ENCODE measurements at regions of chr3 and their contacts with region 1.

Region 1: DNA sequence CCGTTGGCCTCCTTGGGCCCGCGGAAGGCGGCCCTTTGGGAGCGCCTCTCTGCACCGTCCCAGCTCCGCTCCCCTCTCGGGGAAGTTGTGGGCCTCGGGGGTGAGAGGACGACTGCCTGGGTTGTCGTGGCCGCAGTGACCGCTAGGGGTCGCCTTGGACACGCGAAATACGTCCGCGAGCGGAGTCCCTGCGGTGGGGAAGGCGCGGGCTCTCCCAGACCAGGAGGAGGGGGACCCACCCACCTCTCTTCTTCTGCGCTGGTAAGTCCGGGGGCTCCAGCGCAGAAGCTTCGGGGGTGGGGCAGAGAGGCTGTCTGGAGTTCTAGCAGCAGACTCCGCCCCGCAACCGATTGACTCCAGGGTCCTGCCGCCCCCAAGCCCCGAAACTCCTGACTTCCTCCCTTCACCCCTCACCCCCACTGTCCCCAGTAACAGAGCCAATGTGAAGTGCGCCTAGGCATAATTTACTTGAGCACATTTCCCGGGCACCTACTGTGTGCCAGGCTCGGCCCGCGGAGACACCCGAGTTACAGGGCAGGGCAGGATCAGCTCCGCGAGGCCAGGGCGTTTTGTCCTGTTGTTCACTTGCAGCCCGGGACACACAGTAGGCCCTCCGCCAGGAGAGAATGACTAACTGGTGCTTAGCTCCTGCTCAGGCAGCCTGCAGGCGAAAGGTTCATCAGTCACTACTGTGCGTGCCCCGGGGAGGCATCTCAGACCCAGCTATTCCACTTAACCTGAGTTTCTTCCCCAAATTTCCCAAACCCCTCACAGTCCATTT is 32.8 kb downstream of the DNASE1L3 start:
- DNase-seq: no peak
- ATAC-seq: peak; percentile 94
- H3K4me3 ChIP-seq: peak overlapping the region; percentile 33; the same call in 1 of the 2 replicates
- H3K27ac ChIP-seq: no peak overlapping the region
- H3K4me1 ChIP-seq: peaks cover 14% of the 10 kb centered on the region
- H3K27me3 ChIP-seq: no peaks in the 10 kb centered on the region
- CTCF ChIP-seq: peak; percentile 81 to 93 (median 88)
- EP300 ChIP-seq: no peak
- POLR2A ChIP-seq: no peak
- RAD21 ChIP-seq: peak; percentile 68

Region 2: DNA sequence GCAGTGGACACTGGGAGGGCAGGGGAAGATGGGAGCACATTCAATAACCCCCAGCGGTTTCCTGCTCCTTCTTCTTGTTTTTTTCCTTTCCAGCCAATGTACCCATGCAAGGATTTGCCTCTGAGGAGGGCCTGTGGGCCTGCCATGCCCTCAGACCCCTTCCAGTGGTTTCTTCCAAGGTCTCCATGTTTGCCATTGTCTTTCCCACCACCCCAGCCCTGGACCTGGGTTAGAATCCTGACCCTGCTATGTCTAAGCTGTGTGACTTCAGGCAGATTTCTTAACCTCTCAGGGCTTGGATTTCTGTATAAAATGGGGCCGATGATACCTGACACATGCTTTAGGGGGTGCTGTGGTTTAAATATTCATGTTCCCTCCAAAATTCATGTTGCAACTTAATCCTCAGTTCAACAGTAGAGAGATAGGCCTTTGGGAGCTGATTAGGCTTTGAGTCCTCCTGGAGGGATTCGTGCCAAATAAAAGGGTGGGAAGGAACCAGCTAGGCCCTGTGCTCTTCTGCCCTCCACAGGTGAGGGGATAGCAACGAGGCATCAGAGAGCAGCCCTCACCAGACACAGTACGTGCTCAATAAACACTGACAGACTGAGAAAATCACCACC is 216.0 kb before region 1 on chr3:
- CTCF ChIA-PET with region 1: interaction called, 21 read pairs
- POLR2A ChIA-PET with region 1: no interaction called
- RAD21 ChIA-PET with region 1: interaction called, 6 read pairs
- SMC1A ChIA-PET with region 1: interaction called, 4 read pairs
- in situ Hi-C with region 1: no loop called
- intact Hi-C with region 1: loop called (anchors 5 kb)
- DNase-seq: no peak
- ATAC-seq: peak; percentile 57
- H3K4me3 ChIP-seq: no peak overlapping the region
- H3K27ac ChIP-seq: no peak overlapping the region
- H3K4me1 ChIP-seq: peaks cover 14% of the 10 kb centered on the region
- H3K27me3 ChIP-seq: no peaks in the 10 kb centered on the region
- CTCF ChIP-seq: peak; percentile 28 to 49 (median 40); a peak in 4 of 6 replicates
- EP300 ChIP-seq: no peak
- POLR2A ChIP-seq: no peak
- RAD21 ChIP-seq: peak; percentile 61

Region 3: DNA sequence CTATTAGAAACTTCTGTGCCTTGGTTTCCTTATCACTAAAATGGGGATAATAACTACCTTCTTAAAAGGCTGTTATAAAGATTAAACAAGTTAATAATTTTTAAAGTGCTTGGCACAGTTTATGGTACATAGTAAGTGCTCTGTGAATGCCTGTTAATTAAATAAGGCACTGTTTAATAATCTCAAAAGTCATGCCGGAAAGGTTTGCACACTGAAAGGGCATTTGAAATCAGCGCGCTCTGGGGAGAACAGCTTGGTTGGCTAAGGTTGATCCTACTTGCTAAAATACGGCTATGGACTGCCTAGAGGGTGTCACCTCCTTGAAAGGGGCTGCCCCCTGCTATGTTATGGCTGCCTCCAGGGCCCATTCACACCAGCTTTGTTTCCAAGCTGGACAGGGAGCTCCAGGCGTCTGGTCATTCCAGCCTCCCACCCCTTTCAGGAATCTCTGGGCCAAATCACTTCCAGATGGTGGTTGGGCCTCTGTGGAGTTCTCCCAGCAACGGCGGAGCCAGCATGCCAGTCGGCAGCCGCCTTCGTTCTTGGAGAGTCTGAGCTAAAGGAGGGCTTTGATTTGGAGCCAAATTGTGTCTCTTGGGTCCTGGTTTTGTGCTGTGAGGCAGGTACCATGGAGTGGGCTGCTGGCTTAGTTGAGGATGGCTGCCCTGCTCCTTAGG is 163.8 kb before region 1 on chr3:
- CTCF ChIA-PET with region 1: interaction called, 43 read pairs
- POLR2A ChIA-PET with region 1: no interaction called
- RAD21 ChIA-PET with region 1: interaction called, 9 read pairs
- SMC1A ChIA-PET with region 1: interaction called, 15 read pairs
- in situ Hi-C with region 1: loop called (anchors 5 kb)
- intact Hi-C with region 1: no loop called
- DNase-seq: no peak
- ATAC-seq: no peak
- H3K4me3 ChIP-seq: no peak overlapping the region
- H3K27ac ChIP-seq: no peak overlapping the region
- H3K4me1 ChIP-seq: peaks cover 16% of the 10 kb centered on the region
- H3K27me3 ChIP-seq: no peaks in the 10 kb centered on the region
- CTCF ChIP-seq: no peak
- EP300 ChIP-seq: no peak
- POLR2A ChIP-seq: no peak
- RAD21 ChIP-seq: no peak

Region 4: DNA sequence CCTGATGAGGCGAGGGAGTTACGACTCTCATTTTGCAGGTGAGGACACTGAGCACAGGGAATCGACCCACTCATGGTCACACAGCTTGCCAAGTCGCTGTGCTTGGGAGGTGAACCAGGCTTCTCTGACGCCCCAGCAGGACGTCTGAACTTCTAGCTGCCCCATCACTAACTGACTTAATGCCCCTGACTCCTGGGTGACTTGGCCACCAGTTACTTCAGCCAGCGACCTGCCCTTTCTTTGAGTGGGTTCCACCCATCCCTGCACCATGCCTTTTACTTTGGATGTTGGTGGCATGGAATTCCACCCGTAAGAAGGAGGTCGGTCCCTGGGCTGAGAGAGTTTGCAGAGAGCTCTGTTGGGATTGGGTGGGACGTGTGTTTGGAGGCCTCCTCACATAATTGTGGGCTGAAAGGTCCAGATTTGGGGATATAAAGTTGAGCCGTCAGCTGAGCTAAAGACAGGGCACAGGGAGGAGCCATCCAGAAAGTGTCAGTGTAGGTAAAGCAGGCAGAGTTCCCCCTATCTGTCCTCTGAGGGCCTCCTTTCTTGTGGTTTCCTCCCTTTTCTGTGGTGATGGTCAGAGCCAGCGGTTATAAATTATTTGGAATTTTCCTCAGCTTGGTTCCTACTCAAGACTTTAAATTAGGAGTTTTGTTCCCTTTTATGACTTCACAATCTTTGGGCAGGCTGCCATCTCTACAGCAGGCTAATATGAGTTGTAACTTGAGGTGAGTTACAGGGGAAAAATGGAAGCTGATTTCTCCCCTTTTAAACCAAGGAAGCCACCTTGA is 114.7 kb before region 1 on chr3:
- CTCF ChIA-PET with region 1: no interaction called
- POLR2A ChIA-PET with region 1: no interaction called
- RAD21 ChIA-PET with region 1: no interaction called
- SMC1A ChIA-PET with region 1: no interaction called
- in situ Hi-C with region 1: no loop called
- intact Hi-C with region 1: no loop called
- DNase-seq: no peak
- ATAC-seq: no peak
- H3K4me3 ChIP-seq: no peak overlapping the region
- H3K27ac ChIP-seq: no peak overlapping the region
- H3K4me1 ChIP-seq: no peaks in the 10 kb centered on the region
- H3K27me3 ChIP-seq: no peaks in the 10 kb centered on the region
- CTCF ChIP-seq: no peak
- EP300 ChIP-seq: no peak
- POLR2A ChIP-seq: no peak
- RAD21 ChIP-seq: no peak

Region 5: DNA sequence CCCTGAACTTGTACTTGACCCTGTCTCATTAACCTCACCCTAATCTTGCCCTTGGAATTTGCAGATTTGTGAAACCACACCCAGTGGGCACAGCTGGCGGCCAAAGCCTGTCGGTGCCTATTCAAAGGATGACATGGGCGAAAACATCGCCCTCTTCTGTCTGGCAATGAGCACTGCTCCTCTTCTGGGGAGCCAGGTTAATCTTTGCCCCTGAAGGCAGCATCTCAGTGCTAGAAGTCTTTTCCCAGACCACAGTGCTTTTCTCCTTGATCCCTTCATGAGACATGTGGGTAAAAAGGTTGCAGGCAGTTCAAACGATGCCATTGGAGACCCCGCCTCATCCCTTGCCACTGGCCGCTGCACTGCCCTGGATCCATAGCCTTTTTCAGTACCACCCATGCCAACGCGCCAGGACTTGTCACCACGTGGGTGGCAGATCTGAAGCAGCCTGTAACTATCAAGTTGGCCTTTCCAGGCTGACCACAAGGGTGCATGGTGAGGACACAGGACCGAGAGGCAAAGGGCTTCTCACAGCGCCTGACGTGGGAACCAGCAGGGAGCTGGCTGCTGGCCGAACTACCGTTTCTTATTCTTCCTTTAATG is 39.4 kb after region 1 on chr3:
- CTCF ChIA-PET with region 1: interaction called, 655 read pairs
- POLR2A ChIA-PET with region 1: interaction called, 4 read pairs
- RAD21 ChIA-PET with region 1: interaction called, 10 read pairs
- SMC1A ChIA-PET with region 1: interaction called, 191 read pairs
- in situ Hi-C with region 1: no loop called
- intact Hi-C with region 1: no loop called
- DNase-seq: no peak
- ATAC-seq: peak; percentile 59
- H3K4me3 ChIP-seq: no peak overlapping the region
- H3K27ac ChIP-seq: no peak overlapping the region
- H3K4me1 ChIP-seq: peaks cover 56% of the 10 kb centered on the region
- H3K27me3 ChIP-seq: no peaks in the 10 kb centered on the region
- CTCF ChIP-seq: peak; percentile 84 to 94 (median 89)
- EP300 ChIP-seq: 0 out of 4 replicates have a peak, but pooled peaks of 1 of the 2 experiments have one; percentile 19
- POLR2A ChIP-seq: no peak
- RAD21 ChIP-seq: peak; percentile 74

Region 6: GRCh38 chr3:58414538-58415197 is 236.7 kb after region 1 on chr3:
- CTCF ChIA-PET with region 1: interaction called, 11 read pairs
- POLR2A ChIA-PET with region 1: no interaction called
- RAD21 ChIA-PET with region 1: interaction called, 3 read pairs
- SMC1A ChIA-PET with region 1: interaction called, 5 read pairs
- in situ Hi-C with region 1: loop called (anchors 5 kb)
- intact Hi-C with region 1: no loop called
- DNase-seq: no peak
- ATAC-seq: peak; percentile 74
- H3K4me3 ChIP-seq: no peak overlapping the region
- H3K27ac ChIP-seq: no peak overlapping the region
- H3K4me1 ChIP-seq: peaks cover 9% of the 10 kb centered on the region
- H3K27me3 ChIP-seq: no peaks in the 10 kb centered on the region
- CTCF ChIP-seq: peak; percentile 63 to 72 (median 71)
- EP300 ChIP-seq: no peak
- POLR2A ChIP-seq: no peak
- RAD21 ChIP-seq: peak; percentile 80

Region 7: GRCh38 chr3:58630076-58630709 is 452.3 kb after region 1 on chr3:
- CTCF ChIA-PET with region 1: interaction called, 4 read pairs
- POLR2A ChIA-PET with region 1: no interaction called
- RAD21 ChIA-PET with region 1: interaction called, 8 read pairs
- SMC1A ChIA-PET with region 1: interaction called, 3 read pairs
- in situ Hi-C with region 1: loop called (anchors 10 kb)
- intact Hi-C with region 1: loop called (anchors 2 kb)
- DNase-seq: no peak
- ATAC-seq: peak; percentile 87
- H3K4me3 ChIP-seq: no peak overlapping the region
- H3K27ac ChIP-seq: no peak overlapping the region
- H3K4me1 ChIP-seq: no peaks in the 10 kb centered on the region
- H3K27me3 ChIP-seq: peaks cover 2 to 3% of the 10 kb centered on the region in 2 experiments; a peak in 1 of 4 replicates
- CTCF ChIP-seq: peak; percentile 87 to 89 (median 88)
- EP300 ChIP-seq: no peak
- POLR2A ChIP-seq: no peak
- RAD21 ChIP-seq: peak; percentile 83

Measured in GM12878 (cell line).